ENCODE measurements at regions of chr16 and their contacts with region 1.

Region 1: GRCh38 chr16:66608241-66609138 is 4.0 kb downstream of the CMTM3 start:
- DNase-seq: peak; percentile 85
- ATAC-seq: peak; percentile 27
- H3K4me3 Mint-ChIP-seq: no peak overlapping the region
- H3K27ac Mint-ChIP-seq: peak overlapping the region; percentile 79
- H3K4me1 Mint-ChIP-seq: peaks cover 37% of the 10 kb centered on the region
- H3K27me3 Mint-ChIP-seq: no peaks in the 10 kb centered on the region

Region 2: GRCh38 chr16:66521951-66522771 is 86.3 kb before region 1 on chr16:
- CTCF ChIA-PET with region 1: interaction called, 7 read pairs
- POLR2A ChIA-PET with region 1: interaction called, 11 read pairs
- DNase-seq: peak; percentile 96
- ATAC-seq: peak; percentile 85
- H3K4me3 Mint-ChIP-seq: peak overlapping the region; percentile 61
- H3K27ac Mint-ChIP-seq: peak overlapping the region; percentile 95
- H3K4me1 Mint-ChIP-seq: peaks cover 92% of the 10 kb centered on the region
- H3K27me3 Mint-ChIP-seq: no peaks in the 10 kb centered on the region

Region 3: DNA sequence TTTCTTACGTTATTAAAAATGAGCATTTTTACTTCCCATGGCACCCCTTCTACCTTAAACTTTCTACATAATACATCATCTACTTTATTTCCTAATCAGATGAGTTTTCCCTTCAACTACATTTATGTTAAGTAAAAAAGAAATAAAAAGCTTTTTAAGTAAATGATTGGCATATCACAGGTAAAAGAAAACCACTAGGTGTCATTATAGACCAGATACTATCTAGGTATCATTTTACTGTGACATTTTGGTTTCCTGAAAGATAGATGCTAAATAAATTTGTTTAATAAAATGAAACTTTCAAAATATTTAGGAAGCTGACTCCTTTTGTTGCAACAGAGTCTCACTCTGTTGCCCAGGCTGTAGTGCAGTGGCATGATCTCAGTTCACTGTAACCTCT is 46.1 kb before region 1 on chr16:
- CTCF ChIA-PET with region 1: interaction called, 48 read pairs
- POLR2A ChIA-PET with region 1: interaction called, 13 read pairs
- DNase-seq: no peak
- ATAC-seq: no peak
- H3K4me3 Mint-ChIP-seq: no peak overlapping the region
- H3K27ac Mint-ChIP-seq: no peak overlapping the region
- H3K4me1 Mint-ChIP-seq: peaks cover 65% of the 10 kb centered on the region
- H3K27me3 Mint-ChIP-seq: no peaks in the 10 kb centered on the region

Region 4: GRCh38 chr16:66588981-66589713 is 19.3 kb before region 1 on chr16:
- CTCF ChIA-PET with region 1: interaction called, 20 read pairs
- POLR2A ChIA-PET with region 1: interaction called, 21 read pairs
- DNase-seq: peak; percentile 83
- ATAC-seq: peak; percentile 88
- H3K4me3 Mint-ChIP-seq: peak overlapping the region; percentile 55
- H3K27ac Mint-ChIP-seq: peak overlapping the region; percentile 55
- H3K4me1 Mint-ChIP-seq: peaks cover 52% of the 10 kb centered on the region
- H3K27me3 Mint-ChIP-seq: no peaks in the 10 kb centered on the region

Region 5: DNA sequence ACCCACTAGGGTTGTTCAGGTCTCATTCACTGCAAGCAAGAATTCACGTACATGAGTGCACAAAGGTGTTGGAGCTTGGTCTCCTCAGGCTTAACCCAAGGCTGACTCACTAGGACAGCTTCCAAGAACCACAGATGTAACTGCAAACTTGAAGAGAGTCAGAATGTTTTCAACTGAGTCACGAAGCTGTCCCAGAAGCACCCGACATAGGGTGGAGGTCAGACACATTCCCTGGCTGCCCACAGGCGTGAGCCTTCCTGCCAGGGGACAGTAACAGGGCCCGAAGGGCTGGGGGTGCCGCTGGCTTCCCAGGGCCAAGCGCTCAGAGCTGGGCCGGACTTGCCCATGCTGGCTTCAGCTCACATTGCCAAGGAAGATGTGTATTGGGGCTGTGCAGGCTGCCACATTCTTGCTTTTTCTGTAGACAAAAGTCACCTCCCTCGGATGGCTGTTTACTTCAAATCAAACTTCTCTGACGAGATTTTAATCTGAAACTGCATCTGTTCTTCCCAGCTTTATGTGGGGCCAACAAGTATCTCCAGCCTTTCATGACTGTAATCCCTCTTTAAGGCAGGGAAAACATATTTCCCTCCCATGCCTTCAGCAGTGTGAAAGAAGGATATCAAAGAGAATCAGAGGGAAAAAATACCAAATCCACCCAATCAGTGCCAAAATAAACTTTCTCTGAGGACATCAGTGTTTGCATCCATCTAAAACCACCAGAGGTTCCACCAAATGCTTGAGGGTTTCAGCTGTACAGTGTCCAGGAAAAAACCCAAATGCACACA is 10.3 kb after region 1 on chr16:
- CTCF ChIA-PET with region 1: interaction called, 33 read pairs
- POLR2A ChIA-PET with region 1: no interaction called
- DNase-seq: no peak
- ATAC-seq: no peak
- H3K4me3 Mint-ChIP-seq: no peak overlapping the region
- H3K27ac Mint-ChIP-seq: no peak overlapping the region
- H3K4me1 Mint-ChIP-seq: peaks cover 7% of the 10 kb centered on the region
- H3K27me3 Mint-ChIP-seq: no peaks in the 10 kb centered on the region

Region 6: GRCh38 chr16:66668777-66669444 is 60.4 kb after region 1 on chr16:
- CTCF ChIA-PET with region 1: no interaction called
- POLR2A ChIA-PET with region 1: no interaction called
- DNase-seq: no peak
- ATAC-seq: no peak
- H3K4me3 Mint-ChIP-seq: no peak overlapping the region
- H3K27ac Mint-ChIP-seq: no peak overlapping the region
- H3K4me1 Mint-ChIP-seq: no peaks in the 10 kb centered on the region
- H3K27me3 Mint-ChIP-seq: no peaks in the 10 kb centered on the region

Region 7: DNA sequence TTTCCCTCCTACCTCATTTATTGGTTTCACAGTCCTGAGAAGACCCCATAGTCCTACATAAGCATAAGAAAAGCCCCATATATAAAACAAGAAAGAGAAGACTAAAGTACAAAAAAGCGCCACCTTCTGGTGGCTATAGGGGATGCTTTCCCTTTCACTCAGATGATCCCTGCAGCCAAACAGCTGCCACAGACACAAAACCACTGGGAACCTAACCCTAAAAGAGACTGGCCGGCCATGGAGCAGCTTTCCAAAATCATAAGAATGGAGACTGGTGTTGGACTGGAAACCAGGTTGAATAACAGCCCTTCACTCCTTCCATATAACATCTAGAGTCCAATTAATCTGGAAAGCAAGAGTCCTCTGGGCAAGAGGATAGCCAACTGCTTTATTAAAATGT is 131.5 kb after region 1 on chr16:
- CTCF ChIA-PET with region 1: interaction called, 21 read pairs
- POLR2A ChIA-PET with region 1: no interaction called
- DNase-seq: peak; percentile 56
- ATAC-seq: peak; percentile 73
- H3K4me3 Mint-ChIP-seq: no peak overlapping the region
- H3K27ac Mint-ChIP-seq: peak overlapping the region; percentile 9
- H3K4me1 Mint-ChIP-seq: peaks cover 27% of the 10 kb centered on the region
- H3K27me3 Mint-ChIP-seq: no peaks in the 10 kb centered on the region